Caco-2 (cell line): ENCODE measurements at regions of chr7 and their contacts with region 1.

Region 1: GRCh38 chr7:26376175-26376917 is 84.7 kb downstream of the SNX10 start:
- DNase-seq: peak in 1 of 2 experiments; percentile 60
- H3K4me3 ChIP-seq: peak overlapping the region; percentile 51
- H3K4me3 Mint-ChIP-seq: peak overlapping the region; percentile 76
- H3K27ac Mint-ChIP-seq: peak overlapping the region; percentile 15
- H3K4me1 ChIP-seq: no peaks in the 10 kb centered on the region
- H3K4me1 Mint-ChIP-seq: no peaks in the 10 kb centered on the region
- H3K27me3 ChIP-seq: no peaks in the 10 kb centered on the region
- H3K27me3 Mint-ChIP-seq: peaks cover 5% of the 10 kb centered on the region
- CTCF ChIP-seq: no peak

Region 2: DNA sequence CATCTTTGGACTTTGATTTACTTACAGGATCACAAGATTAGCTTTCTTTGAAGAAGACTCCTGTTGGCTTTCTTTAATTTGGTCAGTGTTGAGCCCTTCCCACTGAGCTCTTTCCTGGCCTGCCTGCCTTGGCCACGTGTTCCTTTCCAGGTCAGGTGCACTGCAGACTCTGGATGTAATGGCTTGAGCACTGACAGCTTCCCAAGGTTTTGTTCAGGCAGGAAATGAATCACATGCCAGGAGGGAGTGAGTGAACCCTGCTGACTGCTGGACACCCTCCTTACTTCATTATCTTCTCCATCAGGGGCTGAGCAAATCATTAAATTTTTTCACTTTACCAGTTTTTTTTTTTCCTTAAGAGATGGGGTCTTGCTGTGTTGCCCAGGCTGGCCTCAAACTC is 54.9 kb before region 1 on chr7:
- CTCF ChIA-PET with region 1: no interaction called
- POLR2A ChIA-PET with region 1: no interaction called
- intact Hi-C with region 1: no loop called
- DNase-seq: no peak
- H3K4me3 ChIP-seq: no peak overlapping the region
- H3K4me3 Mint-ChIP-seq: no peak overlapping the region
- H3K27ac Mint-ChIP-seq: no peak overlapping the region
- H3K4me1 ChIP-seq: no peaks in the 10 kb centered on the region
- H3K4me1 Mint-ChIP-seq: no peaks in the 10 kb centered on the region
- H3K27me3 ChIP-seq: no peaks in the 10 kb centered on the region
- H3K27me3 Mint-ChIP-seq: no peaks in the 10 kb centered on the region
- CTCF ChIP-seq: no peak

Region 3: GRCh38 chr7:26508481-26508880 is 132.1 kb after region 1 on chr7:
- CTCF ChIA-PET with region 1: interaction called, 10 read pairs
- POLR2A ChIA-PET with region 1: no interaction called
- intact Hi-C with region 1: no loop called
- DNase-seq: no peak
- H3K4me3 ChIP-seq: no peak overlapping the region
- H3K4me3 Mint-ChIP-seq: no peak overlapping the region
- H3K27ac Mint-ChIP-seq: no peak overlapping the region
- H3K4me1 ChIP-seq: no peaks in the 10 kb centered on the region
- H3K4me1 Mint-ChIP-seq: no peaks in the 10 kb centered on the region
- H3K27me3 ChIP-seq: no peaks in the 10 kb centered on the region
- H3K27me3 Mint-ChIP-seq: peaks cover 19% of the 10 kb centered on the region
- CTCF ChIP-seq: no peak

Region 4: GRCh38 chr7:26667500-26668133 is 291.3 kb after region 1 on chr7:
- CTCF ChIA-PET with region 1: no interaction called
- POLR2A ChIA-PET with region 1: no interaction called
- intact Hi-C with region 1: loop called (anchors 1 kb)
- DNase-seq: peak; percentile 85
- H3K4me3 ChIP-seq: no peak overlapping the region
- H3K4me3 Mint-ChIP-seq: no peak overlapping the region
- H3K27ac Mint-ChIP-seq: no peak overlapping the region
- H3K4me1 ChIP-seq: no peaks in the 10 kb centered on the region
- H3K4me1 Mint-ChIP-seq: no peaks in the 10 kb centered on the region
- H3K27me3 ChIP-seq: no peaks in the 10 kb centered on the region
- H3K27me3 Mint-ChIP-seq: no peaks in the 10 kb centered on the region
- CTCF ChIP-seq: peak; percentile 81 to 87